Endothelial cell of umbilical vein (primary cell): ENCODE measurements at regions of chr6 and their contacts with region 1.

Region 1: GRCh38 chr6:53794720-53795253 is at the start of gene LRRC1:
- DNase-seq: peak; percentile 95
- H3K4me3 ChIP-seq: peak within 1 kb of the TSS; percentile 58 to 76 (median 72)
- H3K27ac ChIP-seq: peak within 1 kb of the TSS; percentile 43
- H3K4me1 ChIP-seq: peaks cover 25% of the 10 kb centered on the region
- H3K27me3 ChIP-seq: no peaks in the 10 kb centered on the region
- CTCF ChIP-seq: no peak
- POLR2A ChIP-seq: peak; percentile 83
- total RNA-seq, gene LRRC1: 10.6 and 11.7 TPM in 2 replicates

Region 2: DNA sequence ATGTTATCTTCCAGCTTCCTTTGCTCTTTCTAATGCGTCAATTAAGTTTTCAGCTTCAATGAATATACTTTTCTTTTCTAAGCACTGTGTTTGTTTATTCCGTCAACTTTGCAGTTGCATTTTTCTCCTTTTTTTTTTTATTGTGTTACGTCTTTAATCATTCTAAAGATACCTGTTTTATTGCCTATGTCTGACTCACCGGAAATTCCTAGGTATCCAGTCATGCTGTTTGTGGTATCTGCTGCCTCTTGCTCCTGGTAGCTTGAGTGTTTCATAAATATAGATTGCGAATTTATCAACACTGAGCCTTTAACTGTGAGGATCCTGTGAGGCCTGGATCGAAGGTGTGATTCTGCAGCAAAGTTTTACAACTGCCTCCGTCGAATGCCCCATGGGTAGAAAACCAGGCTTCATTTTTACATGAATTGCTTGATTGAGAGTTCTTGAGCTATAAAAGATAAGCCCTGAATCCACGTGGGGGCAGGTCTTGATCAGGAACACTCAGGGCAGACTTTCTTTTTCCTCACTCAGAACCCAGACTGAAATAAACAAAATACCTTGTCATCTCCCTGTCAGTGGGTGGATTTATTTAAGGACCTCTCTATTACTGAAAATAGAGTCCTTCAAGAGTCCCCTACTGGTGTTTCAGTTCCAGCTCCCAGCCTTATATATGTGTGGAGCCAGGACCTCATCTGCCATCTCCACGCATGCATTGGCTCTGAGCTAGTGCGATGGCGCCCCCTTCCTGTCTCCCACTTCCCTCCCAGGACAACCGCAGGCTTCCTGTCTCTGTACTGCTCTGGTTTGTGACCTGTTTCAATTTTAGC is 60.1 kb before region 1 on chr6:
- CTCF ChIA-PET with region 1: interaction called, 123 read pairs
- POLR2A ChIA-PET with region 1: interaction called, 3 read pairs
- dilution Hi-C with region 1: no loop called
- intact Hi-C with region 1: loop called (anchors 1 kb)
- DNase-seq: peak; percentile 75
- H3K4me3 ChIP-seq: peak overlapping the region in 1 of 3 experiments; percentile 18
- H3K27ac ChIP-seq: peak overlapping the region; percentile 98
- H3K4me1 ChIP-seq: peaks cover 40% of the 10 kb centered on the region
- H3K27me3 ChIP-seq: no peaks in the 10 kb centered on the region
- CTCF ChIP-seq: peak; percentile 25 to 43
- POLR2A ChIP-seq: no peak

Region 3: GRCh38 chr6:53761036-53761435 is 33.8 kb before region 1 on chr6:
- CTCF ChIA-PET with region 1: no interaction called
- POLR2A ChIA-PET with region 1: no interaction called
- dilution Hi-C with region 1: no loop called
- intact Hi-C with region 1: no loop called
- DNase-seq: no peak
- H3K4me3 ChIP-seq: no peak overlapping the region
- H3K27ac ChIP-seq: no peak overlapping the region
- H3K4me1 ChIP-seq: no peaks in the 10 kb centered on the region
- H3K27me3 ChIP-seq: no peaks in the 10 kb centered on the region
- CTCF ChIP-seq: no peak
- POLR2A ChIP-seq: no peak

Region 4: DNA sequence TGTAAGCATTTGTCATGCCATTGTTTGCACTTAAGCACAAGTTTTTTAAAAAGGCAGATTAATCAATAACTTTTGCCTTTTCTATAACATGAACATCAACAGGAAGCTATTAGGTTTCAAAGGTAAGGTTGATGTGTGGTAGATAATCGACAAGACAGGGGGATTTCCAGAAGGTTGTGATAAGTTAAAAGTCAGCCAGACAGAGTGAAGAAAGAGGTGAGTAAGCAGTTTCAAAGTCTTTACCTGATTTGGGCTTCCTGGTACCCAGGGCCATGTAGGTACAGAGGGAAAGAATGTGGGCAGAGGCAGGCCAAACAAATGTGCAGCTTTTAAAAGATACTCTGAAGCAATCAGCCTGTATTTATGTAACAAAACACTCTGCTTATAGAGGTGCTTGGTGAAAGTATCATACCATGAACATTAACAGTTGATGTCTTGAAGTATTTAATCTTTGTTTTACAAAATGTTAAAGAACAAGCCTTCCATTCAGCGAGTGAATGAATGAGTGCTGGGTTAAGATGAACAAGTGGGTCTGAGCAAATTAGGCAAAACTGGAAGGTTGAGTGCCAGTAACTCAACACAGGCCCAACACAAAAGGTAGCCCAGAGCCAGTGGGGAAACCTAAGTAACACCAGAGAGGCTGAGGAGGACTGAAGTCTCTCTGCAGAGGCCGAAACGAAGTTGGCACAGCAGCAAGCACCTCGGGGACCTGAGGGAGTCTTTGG is 60.2 kb after region 1 on chr6:
- CTCF ChIA-PET with region 1: interaction called, 3 read pairs
- POLR2A ChIA-PET with region 1: no interaction called
- dilution Hi-C with region 1: no loop called
- intact Hi-C with region 1: loop called (anchors 1 kb)
- DNase-seq: no peak
- H3K4me3 ChIP-seq: no peak overlapping the region
- H3K27ac ChIP-seq: no peak overlapping the region
- H3K4me1 ChIP-seq: peaks cover 30% of the 10 kb centered on the region
- H3K27me3 ChIP-seq: no peaks in the 10 kb centered on the region
- CTCF ChIP-seq: no peak
- POLR2A ChIP-seq: no peak

Region 5: GRCh38 chr6:53929041-53929820 is 134.4 kb after region 1 on chr6:
- CTCF ChIA-PET with region 1: interaction called, 8 read pairs
- POLR2A ChIA-PET with region 1: no interaction called
- dilution Hi-C with region 1: no loop called
- intact Hi-C with region 1: loop called (anchors 1 kb)
- DNase-seq: peak; percentile 94
- H3K4me3 ChIP-seq: no peak overlapping the region
- H3K27ac ChIP-seq: peak overlapping the region; percentile 71
- H3K4me1 ChIP-seq: peaks cover 42% of the 10 kb centered on the region
- H3K27me3 ChIP-seq: no peaks in the 10 kb centered on the region
- CTCF ChIP-seq: no peak
- POLR2A ChIP-seq: no peak

Region 6: DNA sequence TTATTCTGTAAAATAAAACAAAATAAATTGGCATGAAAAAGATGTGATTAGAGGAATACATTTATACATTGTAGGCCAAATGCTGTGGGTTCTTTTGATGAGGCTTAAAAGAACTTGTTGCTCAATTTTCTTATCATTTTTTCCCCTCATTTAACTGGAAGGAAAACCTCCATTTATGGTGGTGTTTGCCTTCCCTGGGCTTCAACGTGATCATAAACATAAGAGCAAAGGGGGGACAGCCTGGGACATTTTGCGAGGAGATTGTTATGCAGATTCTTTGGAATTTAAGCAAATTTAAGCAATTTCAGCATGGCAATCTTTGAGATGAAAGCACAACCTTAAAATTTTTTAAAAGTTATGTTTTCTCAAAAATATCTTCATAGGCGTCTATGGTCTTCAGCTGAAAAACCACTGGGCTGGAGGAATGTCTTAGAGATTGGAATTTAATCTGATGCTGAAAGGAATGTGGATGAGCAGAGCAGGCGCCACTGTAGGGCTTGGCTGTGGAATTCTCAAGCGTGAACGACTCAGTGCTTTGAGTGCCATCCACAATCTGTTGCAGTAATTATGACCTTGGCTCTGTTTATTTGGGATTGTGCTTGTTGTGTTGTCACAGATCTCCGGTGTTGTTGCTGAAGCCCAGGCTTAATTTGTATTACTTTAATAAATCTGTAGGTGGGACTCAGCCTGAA is 167.0 kb after region 1 on chr6:
- CTCF ChIA-PET with region 1: interaction called, 319 read pairs
- POLR2A ChIA-PET with region 1: interaction called, 18 read pairs
- dilution Hi-C with region 1: no loop called
- intact Hi-C with region 1: no loop called
- DNase-seq: no peak
- H3K4me3 ChIP-seq: no peak overlapping the region
- H3K27ac ChIP-seq: no peak overlapping the region
- H3K4me1 ChIP-seq: no peaks in the 10 kb centered on the region
- H3K27me3 ChIP-seq: no peaks in the 10 kb centered on the region
- CTCF ChIP-seq: no peak
- POLR2A ChIP-seq: no peak